ENCODE measurements at regions of chr15 and their contacts with region 1.

Region 1: DNA sequence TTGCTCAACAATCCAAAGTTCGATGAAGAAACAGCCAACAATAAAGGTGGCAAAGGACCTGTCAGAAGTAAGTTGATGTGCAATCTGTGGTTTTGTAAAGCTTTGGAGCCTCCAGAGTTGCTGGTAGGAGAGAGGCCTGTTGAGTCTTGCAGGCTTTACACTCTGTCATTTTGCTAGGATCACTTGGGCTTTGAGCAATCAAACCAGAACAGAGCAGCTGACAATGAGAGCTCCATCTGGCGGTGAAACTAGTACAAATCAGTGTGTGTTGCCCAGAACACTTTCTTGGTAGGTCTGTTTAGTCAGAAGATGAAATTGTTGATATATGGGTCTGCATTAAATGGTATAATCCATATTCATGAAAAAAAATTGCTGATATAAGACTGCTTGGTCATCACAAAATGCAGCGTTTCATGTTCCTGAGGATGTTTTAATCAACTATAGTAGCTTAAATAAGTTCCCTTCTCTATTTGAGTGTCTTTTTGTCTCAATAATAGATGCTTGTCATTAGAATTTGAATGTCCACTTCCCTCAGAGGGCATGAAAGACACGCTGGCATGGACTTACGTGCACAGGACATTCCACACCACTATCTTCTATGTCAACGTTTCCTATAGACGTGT is 25.7 kb downstream of the TMOD2 start:
- DNase-seq: no peak
- ATAC-seq: peak; percentile 96

Region 2: DNA sequence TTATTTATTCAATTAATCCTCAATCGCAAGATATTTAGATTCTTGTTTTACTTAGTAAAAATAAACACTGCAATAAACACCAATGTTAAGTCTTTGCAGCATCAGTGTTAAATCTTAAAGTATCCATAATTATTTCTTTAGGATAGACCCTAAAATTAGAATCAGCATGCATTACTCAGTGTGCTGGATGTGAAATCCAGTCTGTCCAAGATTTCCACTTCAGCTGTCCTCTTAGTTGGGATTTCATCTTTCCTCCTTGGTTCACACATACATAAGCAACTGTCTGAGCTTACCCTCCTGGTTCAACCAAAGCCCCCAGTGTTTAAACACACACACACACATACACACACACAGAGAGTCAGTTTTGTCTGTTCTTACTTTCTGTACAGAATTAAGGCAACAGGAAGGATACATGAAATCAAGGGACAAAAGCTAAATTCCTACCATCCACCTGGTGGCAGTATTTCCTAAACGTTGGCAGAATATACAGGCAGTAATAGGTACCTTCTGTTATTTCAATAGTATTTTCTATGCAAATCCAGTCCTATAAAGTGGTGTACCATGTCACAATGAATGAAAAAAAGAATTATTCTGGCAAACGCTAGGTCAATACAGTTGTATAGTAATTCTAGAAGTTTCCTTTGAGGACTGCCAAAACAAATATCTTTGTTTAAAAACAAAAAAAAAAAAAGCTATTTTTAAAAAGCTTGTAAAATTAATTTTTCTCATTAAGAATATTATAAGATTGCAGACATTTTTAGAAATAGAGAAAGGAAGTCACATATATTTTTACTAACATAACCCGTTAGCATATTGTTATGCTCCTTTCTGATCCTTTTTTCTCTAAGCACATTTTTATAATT is 127.2 kb before region 1 on chr15:
- intact Hi-C with region 1: loop called (anchors 2 kb)
- DNase-seq: no peak
- ATAC-seq: peak; percentile 84

Region 3: DNA sequence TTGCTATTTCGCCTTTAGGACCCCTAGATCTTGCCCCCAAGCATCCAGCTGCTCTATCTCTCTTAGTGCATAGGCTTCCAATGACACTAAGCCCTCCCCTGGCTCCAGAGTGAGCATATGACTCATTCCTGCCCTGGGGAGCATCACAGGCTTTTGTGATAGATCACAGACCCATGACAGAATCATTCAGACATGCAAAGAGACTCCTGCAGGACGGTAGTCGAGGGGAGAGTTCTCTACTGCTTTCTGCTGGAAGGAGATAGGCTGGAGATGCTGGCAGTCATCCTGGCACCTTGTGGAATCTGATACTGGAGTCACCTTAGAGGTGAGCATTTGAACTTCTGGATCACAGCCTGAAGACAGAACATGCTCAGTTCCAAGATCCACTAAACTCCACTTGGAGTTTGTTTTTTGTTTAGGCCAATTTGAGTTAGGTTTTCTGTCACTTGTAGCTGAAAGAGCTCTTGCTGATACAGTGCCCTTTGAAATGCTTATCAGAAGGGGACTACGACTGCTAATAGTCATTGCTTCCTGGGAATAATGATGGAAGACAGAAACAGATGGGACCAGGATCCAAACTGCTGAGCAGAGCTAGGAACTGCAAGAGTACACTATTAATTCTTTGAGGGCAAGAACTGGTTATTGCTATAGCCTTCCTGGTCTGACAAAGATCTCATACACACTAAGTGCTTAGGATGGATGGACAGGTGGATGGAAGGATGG is 50.6 kb before region 1 on chr15:
- intact Hi-C with region 1: loop called (anchors 10 kb)
- DNase-seq: peak; percentile 48
- ATAC-seq: peak; percentile 95